Dorsolateral prefrontal cortex (tissue), 120 donors: ENCODE measurements at regions of chr13 and their contacts with region 1.

Region 1: GRCh38 chr13:114132419-114133121 is at the start of gene RASA3:
- DNase-seq: peak in 7 of 10 donors; percentile 53 to 86 (median 71)
- H3K4me3 ChIP-seq: peak within 1 kb of the TSS; percentile 49 to 93 (median 83)
- H3K27ac ChIP-seq: peak within 1 kb of the TSS; percentile 5 to 92 (median 80)
- H3K27me3 ChIP-seq: no peaks in the 10 kb centered on the region
- CTCF ChIP-seq: no peak
- total RNA-seq, gene RASA3: 31.0 to 93.4 (median 44.7) TPM

Region 2: GRCh38 chr13:114035583-114036531 is 96.7 kb before region 1 on chr13:
- intact Hi-C with region 1: loop called (anchors 5 kb)
- DNase-seq: peak; percentile 44 to 93 (median 86)
- H3K4me3 ChIP-seq: peak overlapping the region; percentile 7 to 67 (median 42)
- H3K27ac ChIP-seq: peak overlapping the region; percentile 40 to 97 (median 91)
- H3K27me3 ChIP-seq: no peaks in the 10 kb centered on the region
- CTCF ChIP-seq: peak in 7 of 56 donors; percentile 5 to 21 (median 13)

Region 3: GRCh38 chr13:114166381-114167131 is 34.0 kb after region 1 on chr13:
- intact Hi-C with region 1: loop called in 1 of 2 experiments (anchors 5 kb)
- DNase-seq: peak; percentile 54 to 89 (median 78)
- H3K4me3 ChIP-seq: peak overlapping the region in 34 of 59 donors; percentile 1 to 46 (median 20)
- H3K27ac ChIP-seq: peak overlapping the region in 58 of 59 donors; percentile 3 to 91 (median 80)
- H3K27me3 ChIP-seq: peaks cover 0 to 7% (median 0%) of the 10 kb centered on the region in 45 donors
- CTCF ChIP-seq: peak in 26 of 56 donors; percentile 6 to 45 (median 20)

Region 4: GRCh38 chr13:114203536-114203935 is 71.0 kb after region 1 on chr13:
- intact Hi-C with region 1: no loop called
- DNase-seq: no peak
- H3K4me3 ChIP-seq: no peak overlapping the region
- H3K27ac ChIP-seq: no peak overlapping the region
- H3K27me3 ChIP-seq: peaks cover 0 to 26% (median 6%) of the 10 kb centered on the region in 45 donors
- CTCF ChIP-seq: no peak